ENCODE measurements at regions of chr12 and their contacts with region 1.

Region 1: DNA sequence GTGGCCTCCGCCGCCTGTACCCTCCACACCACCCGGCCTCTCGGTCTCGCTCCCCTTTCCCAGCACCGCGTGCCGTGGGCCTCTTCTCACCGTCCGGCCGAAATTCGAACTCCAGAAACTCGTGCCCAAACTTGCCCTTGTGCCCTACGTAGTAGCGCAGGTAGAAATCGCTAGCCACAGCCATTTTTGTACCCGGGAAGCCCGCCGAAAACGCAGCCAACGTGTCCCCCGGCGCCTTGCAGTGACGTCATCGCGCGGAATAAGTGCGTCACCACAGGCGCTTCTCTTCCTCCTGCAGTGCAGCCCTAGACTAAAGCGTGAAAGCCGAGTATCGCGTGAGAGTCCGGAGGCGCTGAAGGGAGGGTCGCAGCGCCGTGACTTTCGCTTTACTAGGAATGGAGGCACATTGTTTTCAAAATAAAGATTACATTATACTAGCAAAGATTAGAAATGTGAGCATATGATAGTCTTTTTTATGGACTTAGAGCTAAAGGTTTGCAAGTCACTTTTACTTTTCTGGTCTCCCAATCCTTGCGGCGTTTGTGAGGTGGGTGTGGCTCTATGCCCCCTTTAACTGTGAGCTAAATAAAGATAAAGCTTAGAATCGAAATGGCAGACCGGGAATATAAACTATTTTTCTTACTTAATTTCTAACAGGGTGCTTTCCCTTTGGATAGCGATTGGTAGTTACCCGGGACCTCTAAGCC is at the start of gene MAGOHB:
- DNase-seq: peak; percentile 99
- H3K4me3 Mint-ChIP-seq: peak within 1 kb of the TSS; percentile 98
- H3K27ac Mint-ChIP-seq: peak within 1 kb of the TSS; percentile 99
- H3K4me1 Mint-ChIP-seq: peaks cover 34% of the 10 kb centered on the region
- H3K27me3 Mint-ChIP-seq: peaks cover 8% of the 10 kb centered on the region
- total RNA-seq, gene MAGOHB: 66.2 to 69.1 TPM

Region 2: DNA sequence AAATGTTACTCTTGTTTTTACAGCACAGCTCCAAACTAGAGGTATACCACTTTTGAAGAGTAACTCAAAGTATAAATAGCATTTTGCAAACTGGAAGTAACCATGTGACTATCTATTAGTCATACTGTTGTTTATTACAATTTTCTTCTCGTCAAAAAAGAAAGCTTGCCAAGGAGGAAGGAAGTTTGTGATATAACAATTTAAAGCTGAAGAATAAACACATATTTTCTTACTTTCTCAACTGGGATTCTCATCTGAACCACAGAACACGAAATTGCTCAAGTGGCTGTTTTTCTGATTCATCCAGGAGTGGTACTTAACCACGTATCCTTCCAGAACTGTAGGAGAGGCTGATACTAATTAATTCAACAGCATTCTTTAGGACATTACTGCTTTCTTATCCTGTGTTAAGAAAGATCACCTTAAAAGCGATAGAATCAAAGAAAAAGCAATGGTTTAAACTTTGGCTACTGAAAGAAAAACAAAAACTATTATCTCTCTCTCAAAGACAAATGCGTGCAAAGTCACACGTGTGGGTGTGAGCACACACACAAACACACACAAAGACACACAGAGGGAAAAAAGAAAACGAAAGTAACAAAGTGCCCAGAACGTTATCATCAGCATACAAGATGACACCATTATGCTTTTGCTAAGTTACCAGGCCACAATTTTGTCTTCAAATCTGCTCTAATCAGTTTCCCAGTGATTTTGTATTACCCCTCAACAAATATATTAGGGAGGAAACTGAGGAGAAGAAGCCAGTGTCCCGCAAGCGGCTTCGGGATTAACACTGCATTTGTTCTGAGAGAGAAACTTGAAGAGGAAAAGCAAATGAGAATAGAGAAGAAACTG is 744.0 kb before region 1 on chr12 and contains the start of gene CLEC2B:
- CTCF ChIA-PET with region 1: no interaction called
- POLR2A ChIA-PET with region 1: no interaction called
- intact Hi-C with region 1: loop called (anchors 10 kb)
- DNase-seq: peak; percentile 41
- H3K4me3 Mint-ChIP-seq: peak within 1 kb of the TSS; percentile 82
- H3K27ac Mint-ChIP-seq: peak within 1 kb of the TSS; percentile 93
- H3K4me1 Mint-ChIP-seq: peaks cover 19% of the 10 kb centered on the region
- H3K27me3 Mint-ChIP-seq: no peaks in the 10 kb centered on the region
- total RNA-seq, gene CLEC2B: 12.6 to 13.7 TPM

Region 3: GRCh38 chr12:10540776-10541205 is 72.7 kb before region 1 on chr12:
- CTCF ChIA-PET with region 1: no interaction called
- POLR2A ChIA-PET with region 1: no interaction called
- intact Hi-C with region 1: loop called (anchors 2 kb)
- DNase-seq: no peak
- H3K4me3 Mint-ChIP-seq: no peak overlapping the region
- H3K27ac Mint-ChIP-seq: no peak overlapping the region
- H3K4me1 Mint-ChIP-seq: peaks cover 9% of the 10 kb centered on the region
- H3K27me3 Mint-ChIP-seq: peaks cover 39% of the 10 kb centered on the region

Region 4: DNA sequence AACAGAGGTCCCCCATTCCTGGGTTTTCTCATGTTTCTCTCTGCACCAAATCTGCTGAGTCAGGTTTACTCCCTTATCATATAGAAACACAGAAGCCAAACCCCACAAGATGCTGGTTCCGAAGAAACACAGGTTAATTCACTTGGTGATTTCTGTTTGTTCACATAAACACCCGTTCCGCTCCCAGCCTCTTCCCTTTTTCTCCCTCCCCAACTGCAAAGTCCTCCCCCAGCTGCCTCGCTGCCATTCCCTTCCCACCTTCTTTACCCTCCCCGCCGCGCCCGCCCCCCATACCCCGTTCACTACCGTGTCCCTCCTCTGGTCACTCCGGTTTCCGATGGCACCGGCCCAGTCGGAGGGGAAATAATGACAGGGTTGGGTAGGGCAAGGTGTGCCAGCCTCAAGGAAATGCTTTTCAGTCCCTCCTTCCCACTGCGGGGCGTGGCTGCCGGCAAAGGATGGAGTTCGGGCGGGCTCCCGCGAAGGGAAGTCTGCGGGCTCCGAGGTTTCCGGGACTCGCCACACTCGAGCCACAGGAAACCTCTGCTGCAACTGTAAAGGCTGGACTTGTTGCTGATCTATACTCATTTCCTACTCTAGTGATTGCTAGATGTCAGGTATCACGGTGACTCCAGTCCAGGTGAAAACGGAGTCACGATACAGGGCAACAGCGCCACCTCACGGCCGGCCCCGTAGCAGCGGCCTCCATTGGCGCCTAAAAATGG is 60.3 kb after region 1 on chr12 and contains the start of gene STYK1:
- CTCF ChIA-PET with region 1: interaction called, 3 read pairs
- POLR2A ChIA-PET with region 1: no interaction called
- intact Hi-C with region 1: loop called (anchors 1 kb)
- DNase-seq: peak; percentile 78
- H3K4me3 Mint-ChIP-seq: peak within 1 kb of the TSS; percentile 67
- H3K27ac Mint-ChIP-seq: no peak within 1 kb of the TSS
- H3K4me1 Mint-ChIP-seq: peaks cover 26% of the 10 kb centered on the region
- H3K27me3 Mint-ChIP-seq: peaks cover 38% of the 10 kb centered on the region
- total RNA-seq, gene STYK1: not detected

Region 5: GRCh38 chr12:10690906-10691305 is 77.4 kb after region 1 on chr12:
- CTCF ChIA-PET with region 1: no interaction called
- POLR2A ChIA-PET with region 1: no interaction called
- intact Hi-C with region 1: no loop called
- DNase-seq: no peak
- H3K4me3 Mint-ChIP-seq: no peak overlapping the region
- H3K27ac Mint-ChIP-seq: no peak overlapping the region
- H3K4me1 Mint-ChIP-seq: no peaks in the 10 kb centered on the region
- H3K27me3 Mint-ChIP-seq: peaks cover 5% of the 10 kb centered on the region

Region 6: GRCh38 chr12:10721651-10722501 is 108.4 kb after region 1 on chr12:
- CTCF ChIA-PET with region 1: interaction called, 5 read pairs
- POLR2A ChIA-PET with region 1: no interaction called
- intact Hi-C with region 1: loop called (anchors 2 kb)
- DNase-seq: peak; percentile 69
- H3K4me3 Mint-ChIP-seq: peak overlapping the region; percentile 93
- H3K27ac Mint-ChIP-seq: peak overlapping the region; percentile 86
- H3K4me1 Mint-ChIP-seq: peaks cover 20% of the 10 kb centered on the region
- H3K27me3 Mint-ChIP-seq: peaks cover 53% of the 10 kb centered on the region

Region 7: GRCh38 chr12:11171145-11171968 is 557.9 kb after region 1 on chr12 and contains the start of gene SMIM10L1:
- CTCF ChIA-PET with region 1: no interaction called
- POLR2A ChIA-PET with region 1: interaction called, 3 read pairs
- intact Hi-C with region 1: loop called (anchors 5 kb)
- DNase-seq: peak; percentile 93
- H3K4me3 Mint-ChIP-seq: peak within 1 kb of the TSS; percentile 96
- H3K27ac Mint-ChIP-seq: peak within 1 kb of the TSS; percentile 99
- H3K4me1 Mint-ChIP-seq: peaks cover 42% of the 10 kb centered on the region
- H3K27me3 Mint-ChIP-seq: no peaks in the 10 kb centered on the region
- total RNA-seq, gene SMIM10L1: 5.9 to 6.5 TPM

Measured in activated CD4-positive, alpha-beta memory T cell treated with anti-CD3 and anti-CD28 coated beads for 36 hours (primary cell).